Ovary (tissue), 10 donors: ENCODE measurements at regions of chr10 and their contacts with region 1.

Region 1: DNA sequence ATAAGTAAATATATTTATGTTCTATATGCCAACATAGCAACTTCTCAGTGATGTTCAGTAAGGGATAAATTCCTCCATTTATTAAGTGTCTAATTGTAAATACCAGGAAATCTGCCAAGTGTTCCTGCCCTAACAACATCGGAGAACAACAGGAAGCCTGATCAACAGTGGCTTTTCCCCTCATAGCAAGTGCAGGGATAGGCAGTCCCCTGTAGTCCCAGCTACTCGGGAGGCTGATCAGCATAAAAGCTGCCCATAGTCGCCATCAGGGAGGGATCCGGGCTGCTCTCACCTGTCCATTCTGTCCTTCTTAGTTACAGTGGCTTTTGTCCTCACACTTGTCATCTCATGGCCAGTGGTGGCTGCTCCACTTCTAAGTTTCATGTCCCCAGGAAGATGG is 141.3 kb downstream of the IDE start:
- DNase-seq: no peak
- H3K4me3 ChIP-seq: no peak overlapping the region
- H3K27ac ChIP-seq: no peak overlapping the region
- H3K4me1 ChIP-seq: no peaks in the 10 kb centered on the region
- H3K27me3 ChIP-seq: no peaks in the 10 kb centered on the region
- CTCF ChIP-seq: no peak
- EP300 ChIP-seq: no peak
- POLR2A ChIP-seq: no peak

Region 2: DNA sequence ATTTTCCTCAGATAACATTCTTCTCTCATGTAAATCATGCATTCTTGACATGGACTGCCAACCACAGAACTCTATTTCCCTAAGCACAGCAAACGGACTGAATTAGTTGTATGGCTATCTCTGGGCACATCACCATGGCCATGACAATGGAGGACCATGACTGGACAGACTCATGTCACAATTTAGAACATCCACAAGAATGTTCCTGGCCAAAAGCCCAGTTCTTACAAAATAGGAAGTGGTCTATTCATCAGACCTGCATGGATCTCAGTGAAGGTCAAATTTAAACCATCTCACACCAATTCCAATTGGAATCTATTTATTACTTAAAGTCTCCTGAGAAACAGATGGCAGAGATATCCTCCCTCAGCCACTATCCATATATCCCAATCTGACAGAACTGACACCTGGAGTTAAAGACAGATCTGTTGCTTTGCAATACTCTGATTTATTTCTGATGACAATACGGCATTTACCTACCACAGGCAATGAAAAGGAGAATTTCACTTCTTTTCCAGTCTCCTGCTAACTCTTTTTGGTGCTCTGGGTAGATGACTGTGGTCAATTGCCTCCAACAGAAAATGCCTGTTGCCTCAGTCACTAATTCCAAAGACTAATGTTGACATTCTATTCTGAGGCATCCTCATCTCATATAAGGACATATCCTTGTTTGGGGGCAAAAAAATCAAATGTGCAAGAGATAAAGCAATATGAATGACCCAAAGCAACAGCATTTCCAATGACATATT is 1829.6 kb before region 1 on chr10:
- intact Hi-C with region 1: no loop called
- DNase-seq: no peak
- H3K4me3 ChIP-seq: no peak overlapping the region
- H3K27ac ChIP-seq: no peak overlapping the region
- H3K4me1 ChIP-seq: no peaks in the 10 kb centered on the region
- H3K27me3 ChIP-seq: no peaks in the 10 kb centered on the region
- CTCF ChIP-seq: no peak
- EP300 ChIP-seq: no peak
- POLR2A ChIP-seq: no peak

Region 3: GRCh38 chr10:92087750-92088395 is 344.7 kb before region 1 on chr10:
- intact Hi-C with region 1: loop called (anchors 1 to 5 kb)
- DNase-seq: peak; percentile 51 to 74 (median 62)
- H3K4me3 ChIP-seq: no peak overlapping the region
- H3K27ac ChIP-seq: peak overlapping the region in 1 of 2 donors; percentile 53
- H3K4me1 ChIP-seq: peaks cover 2% of the 10 kb centered on the region
- H3K27me3 ChIP-seq: peaks cover 5% of the 10 kb centered on the region
- CTCF ChIP-seq: peak; percentile 78 to 85 (median 81)
- EP300 ChIP-seq: no peak
- POLR2A ChIP-seq: no peak

Region 4: GRCh38 chr10:92290837-92291615 is 141.6 kb before region 1 on chr10 and contains the starts of genes CPEB3 and MARCHF5:
- intact Hi-C with region 1: loop called in 1 of 4 experiments (anchors 10 kb)
- DNase-seq: peak; percentile 96 to 97 (median 96)
- H3K4me3 ChIP-seq: peak within 1 kb of the TSS; percentile 80
- H3K27ac ChIP-seq: peak within 1 kb of the TSS; percentile 86 to 93
- H3K4me1 ChIP-seq: peaks cover 3% of the 10 kb centered on the region
- H3K27me3 ChIP-seq: no peaks in the 10 kb centered on the region
- CTCF ChIP-seq: peak; percentile 56 to 96 (median 95)
- EP300 ChIP-seq: no peak
- POLR2A ChIP-seq: peak; percentile 90
- total RNA-seq, gene CPEB3: 4.8 to 6.6 (median 5.7) TPM
- total RNA-seq, gene MARCHF5: 15.4 to 44.1 (median 36.4) TPM